Activated T-helper 1 cell treated with anti-CD3 and anti-CD28 coated beads, Interleukin-12 subunit alpha, Interleukin-12 subunit beta, Interleukin-2, Interleukin-4 antibody, amounts not matched to agents 30 ng/mL and 10 ng/mL and 1 ng/mL, durations not matched to agents 14 hours and 24 hours and 36 hours (primary cell): ENCODE measurements at regions of chr14 and their contacts with region 1.

Region 1: GRCh38 chr14:57317316-57317715 is 48.5 kb downstream of the AP5M1 start:
- DNase-seq: peak; percentile 44
- H3K4me3 Mint-ChIP-seq: no peak overlapping the region
- H3K27ac Mint-ChIP-seq: no peak overlapping the region
- H3K4me1 Mint-ChIP-seq: no peaks in the 10 kb centered on the region
- H3K27me3 Mint-ChIP-seq: no peaks in the 10 kb centered on the region

Region 2: GRCh38 chr14:56491299-56492285 is 825.7 kb before region 1 on chr14:
- intact Hi-C with region 1: loop called (anchors 1 kb)
- DNase-seq: peak; percentile 2
- H3K4me3 Mint-ChIP-seq: no peak overlapping the region
- H3K27ac Mint-ChIP-seq: no peak overlapping the region
- H3K4me1 Mint-ChIP-seq: peaks cover 7% of the 10 kb centered on the region
- H3K27me3 Mint-ChIP-seq: no peaks in the 10 kb centered on the region

Region 3: GRCh38 chr14:56659964-56660551 is 657.3 kb before region 1 on chr14:
- intact Hi-C with region 1: loop called (anchors 1 kb)
- DNase-seq: no peak
- H3K4me3 Mint-ChIP-seq: no peak overlapping the region
- H3K27ac Mint-ChIP-seq: no peak overlapping the region
- H3K4me1 Mint-ChIP-seq: no peaks in the 10 kb centered on the region
- H3K27me3 Mint-ChIP-seq: no peaks in the 10 kb centered on the region

Region 4: GRCh38 chr14:57199921-57200320 is 117.4 kb before region 1 on chr14:
- intact Hi-C with region 1: loop called (anchors 2 kb)
- DNase-seq: no peak
- H3K4me3 Mint-ChIP-seq: no peak overlapping the region
- H3K27ac Mint-ChIP-seq: no peak overlapping the region
- H3K4me1 Mint-ChIP-seq: no peaks in the 10 kb centered on the region
- H3K27me3 Mint-ChIP-seq: peaks cover 6% of the 10 kb centered on the region

Region 5: GRCh38 chr14:57362361-57362760 is 45.0 kb after region 1 on chr14:
- intact Hi-C with region 1: no loop called
- DNase-seq: no peak
- H3K4me3 Mint-ChIP-seq: no peak overlapping the region
- H3K27ac Mint-ChIP-seq: no peak overlapping the region
- H3K4me1 Mint-ChIP-seq: no peaks in the 10 kb centered on the region
- H3K27me3 Mint-ChIP-seq: peaks cover 14% of the 10 kb centered on the region